GM10248 (cell line): ENCODE measurements at regions of chr1 and their contacts with region 1.

Region 1: DNA sequence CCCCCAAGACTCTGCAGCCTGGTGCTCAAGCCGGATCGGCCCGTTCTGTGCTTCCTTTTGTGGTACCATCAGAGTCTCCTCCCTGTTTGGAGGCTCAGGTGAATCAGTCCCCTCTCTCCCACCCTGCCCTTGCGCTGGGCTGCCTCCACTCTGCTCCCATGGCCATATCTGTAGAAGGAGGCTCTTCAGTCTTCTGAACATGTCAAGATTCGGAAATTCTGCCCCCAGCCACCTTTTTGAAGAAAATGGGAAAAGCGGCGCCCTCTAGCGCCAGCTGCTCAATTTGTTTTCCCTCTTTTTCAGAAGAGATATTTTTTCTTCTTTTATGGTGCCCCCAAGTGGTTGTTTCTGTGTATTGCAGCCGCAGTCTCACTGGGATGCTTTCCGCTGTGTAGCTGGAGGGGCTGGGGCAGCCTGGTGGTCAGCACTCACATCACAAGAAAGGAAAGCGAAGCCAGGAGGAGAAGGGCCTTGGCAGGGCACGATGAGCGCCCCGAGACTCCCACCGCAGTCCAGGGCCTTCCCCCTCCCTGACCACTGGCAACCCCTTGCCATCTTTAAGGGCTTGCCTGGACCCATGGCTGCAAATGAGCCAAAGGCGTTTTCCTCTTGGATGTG is 58.4 kb upstream of the CACNA1E start:
- DNase-seq: peak; percentile 70
- CTCF ChIP-seq: peak; percentile 95

Region 2: DNA sequence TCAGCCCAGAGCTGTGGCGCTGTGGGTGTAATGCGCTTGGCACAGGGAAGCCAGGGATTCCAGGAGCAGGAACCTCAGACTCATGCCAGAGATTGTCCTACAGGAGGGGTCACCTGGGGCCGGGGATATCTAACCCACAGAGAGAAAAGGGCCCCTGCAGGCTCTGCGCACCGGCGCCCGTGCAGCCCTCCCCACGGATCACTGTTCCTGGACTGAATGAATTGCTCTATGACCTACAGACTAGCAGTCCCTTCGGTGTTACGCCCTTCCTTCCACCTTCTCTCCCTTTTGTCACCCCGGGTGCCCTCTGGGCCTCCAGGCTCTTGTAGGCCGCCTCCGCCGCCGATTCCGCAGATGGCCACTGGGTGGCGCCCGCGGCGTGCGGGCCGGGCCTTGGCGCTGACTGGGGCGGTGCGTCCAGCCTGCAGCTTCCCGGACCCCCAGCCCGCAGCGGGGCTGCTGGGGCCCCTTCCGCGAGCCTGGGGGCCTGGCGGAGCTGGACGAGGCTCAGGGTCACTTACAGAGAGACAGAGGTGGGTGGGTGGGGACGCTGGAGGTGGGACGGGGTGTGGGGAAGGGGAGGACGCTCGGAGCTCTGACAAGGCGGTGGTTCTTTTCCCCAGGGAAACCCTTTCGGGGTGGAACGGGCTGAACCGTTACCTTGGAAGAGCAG is 235.1 kb before region 1 on chr1:
- CTCF ChIA-PET with region 1: interaction called, 117 read pairs
- POLR2A ChIA-PET with region 1: no interaction called
- DNase-seq: peak; percentile 91
- CTCF ChIP-seq: peak; percentile 99

Region 3: GRCh38 chr1:181369416-181369815 is 55.5 kb before region 1 on chr1:
- CTCF ChIA-PET with region 1: no interaction called
- POLR2A ChIA-PET with region 1: no interaction called
- DNase-seq: no peak
- CTCF ChIP-seq: no peak

Region 4: GRCh38 chr1:181406989-181407388 is 17.9 kb before region 1 on chr1:
- CTCF ChIA-PET with region 1: interaction called, 53 read pairs
- POLR2A ChIA-PET with region 1: no interaction called
- DNase-seq: no peak
- CTCF ChIP-seq: no peak

Region 5: DNA sequence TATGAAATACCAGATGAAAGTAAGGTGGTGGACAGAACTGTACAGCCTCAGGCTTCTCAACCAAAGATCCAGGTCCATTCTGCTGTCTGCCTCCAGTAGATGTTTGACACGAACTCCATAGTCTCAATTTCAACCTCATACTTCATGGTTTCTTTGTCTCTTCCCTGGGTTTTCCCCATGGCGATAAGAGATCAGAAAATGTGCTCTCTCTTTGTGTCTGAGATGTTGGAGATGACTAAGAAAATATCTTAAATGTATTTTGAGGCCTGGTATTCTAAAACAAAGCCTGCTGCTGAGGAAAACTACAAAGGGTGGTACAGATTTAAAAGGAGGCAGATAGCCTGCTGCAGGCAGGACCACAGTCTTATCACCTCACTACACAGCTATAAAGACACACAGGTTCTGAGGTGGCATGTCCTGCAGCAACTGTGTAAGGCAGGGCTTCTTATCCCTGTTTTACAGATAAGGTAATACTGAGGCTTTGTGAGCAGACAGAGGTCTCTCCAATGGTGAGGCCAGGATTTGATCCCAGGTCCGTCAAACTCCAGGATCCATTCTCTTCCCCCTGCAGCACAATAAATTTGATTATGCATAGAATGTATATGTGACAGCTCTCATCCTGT is 18.4 kb after region 1 on chr1:
- CTCF ChIA-PET with region 1: interaction called, 40 read pairs
- POLR2A ChIA-PET with region 1: no interaction called
- DNase-seq: no peak
- CTCF ChIP-seq: no peak

Region 6: GRCh38 chr1:181469829-181470228 is 44.9 kb after region 1 on chr1:
- CTCF ChIA-PET with region 1: interaction called, 11 read pairs
- POLR2A ChIA-PET with region 1: no interaction called
- DNase-seq: no peak
- CTCF ChIP-seq: no peak

Region 7: GRCh38 chr1:181806746-181807145 is 381.9 kb after region 1 on chr1:
- CTCF ChIA-PET with region 1: no interaction called
- POLR2A ChIA-PET with region 1: no interaction called
- DNase-seq: no peak
- CTCF ChIP-seq: no peak